K562 (cell line): ENCODE measurements at regions of chr10 and their contacts with region 1.

Region 1: GRCh38 chr10:109852475-109853037 is 70.8 kb downstream of the XPNPEP1 start:
- DNase-seq: peak; percentile 47 to 71 (median 53)
- ATAC-seq: peak; percentile 96
- H3K4me3 ChIP-seq: no peak overlapping the region
- H3K27ac ChIP-seq: no peak overlapping the region
- H3K4me1 ChIP-seq: no peaks in the 10 kb centered on the region
- H3K27me3 ChIP-seq: peaks cover 0 to 11% of the 10 kb centered on the region in 2 experiments; a peak in 3 of 5 replicates
- CTCF ChIP-seq: peak; percentile 64 to 77 (median 65)
- EP300 ChIP-seq: no peak
- POLR2A ChIP-seq: no peak
- RAD21 ChIP-seq: peak; percentile 51 to 76

Region 2: GRCh38 chr10:111323389-111323966 is 1470.9 kb after region 1 on chr10:
- CTCF ChIA-PET with region 1: no interaction called
- POLR2A ChIA-PET with region 1: no interaction called
- in situ Hi-C with region 1: loop called (anchors 25 kb)
- intact Hi-C with region 1: no loop called
- DNase-seq: no peak
- ATAC-seq: no peak
- H3K4me3 ChIP-seq: no peak overlapping the region
- H3K27ac ChIP-seq: no peak overlapping the region
- H3K4me1 ChIP-seq: no peaks in the 10 kb centered on the region
- H3K27me3 ChIP-seq: no peaks in the 10 kb centered on the region
- CTCF ChIP-seq: no peak
- EP300 ChIP-seq: no peak
- POLR2A ChIP-seq: no peak
- RAD21 ChIP-seq: 0 out of 4 replicates have a peak, but pooled peaks of 1 of the 2 experiments have one; percentile 8